RWPE1 (cell line): ENCODE measurements at regions of chr13 and their contacts with region 1.

Region 1: GRCh38 chr13:106090001-106090783 is 445.3 kb downstream of the EFNB2 start:
- DNase-seq: no peak
- H3K27ac ChIP-seq: no peak overlapping the region
- CTCF ChIP-seq: no peak

Region 2: DNA sequence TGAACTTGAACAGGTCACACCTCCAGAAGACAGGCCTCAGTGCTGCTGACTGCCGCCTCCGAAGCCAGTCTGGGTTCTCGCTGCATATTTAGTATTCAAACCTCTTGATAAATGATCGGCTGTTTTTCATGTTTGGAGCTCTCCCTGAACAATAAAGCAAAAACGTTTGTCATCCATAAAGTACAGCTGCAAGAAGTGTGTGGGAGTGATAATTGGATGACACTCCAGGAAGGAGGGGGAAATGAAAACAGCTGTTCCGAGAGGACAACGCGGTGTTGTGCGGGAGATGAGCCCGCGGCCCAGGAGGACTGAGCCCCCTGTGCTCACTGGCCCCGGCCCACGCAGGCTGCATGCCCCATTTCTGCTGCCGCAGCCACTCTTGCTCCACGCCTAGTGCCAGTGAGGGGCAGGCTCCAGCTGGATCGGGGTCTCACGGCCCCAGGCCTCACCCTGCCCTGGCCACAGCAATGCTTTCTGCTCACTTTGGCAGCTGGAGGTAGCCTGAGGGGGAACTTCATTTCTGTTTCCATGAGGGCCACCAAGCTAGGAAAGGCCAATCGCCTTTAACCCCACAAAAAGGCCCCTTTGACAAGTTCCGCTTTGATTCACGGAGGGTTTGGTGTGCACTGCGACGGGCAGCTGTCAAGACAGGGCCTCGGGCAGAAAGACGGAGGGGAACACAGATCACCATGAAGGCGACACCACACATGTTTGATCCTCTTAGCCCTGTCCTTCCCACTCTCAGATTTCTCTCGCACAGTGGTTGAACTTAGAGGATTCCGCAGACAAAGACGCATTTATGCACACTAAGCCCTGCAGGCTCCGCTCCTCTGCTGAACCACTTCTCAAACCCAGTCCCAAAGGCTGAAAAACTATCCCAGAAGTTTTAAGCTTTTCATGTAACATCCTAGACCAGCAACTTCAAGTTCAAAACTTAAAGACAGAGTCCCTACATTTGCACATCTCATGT is 92.3 kb before region 1 on chr13:
- CTCF ChIA-PET with region 1: no interaction called
- POLR2A ChIA-PET with region 1: no interaction called
- DNase-seq: no peak
- H3K27ac ChIP-seq: no peak overlapping the region
- CTCF ChIP-seq: no peak

Region 3: DNA sequence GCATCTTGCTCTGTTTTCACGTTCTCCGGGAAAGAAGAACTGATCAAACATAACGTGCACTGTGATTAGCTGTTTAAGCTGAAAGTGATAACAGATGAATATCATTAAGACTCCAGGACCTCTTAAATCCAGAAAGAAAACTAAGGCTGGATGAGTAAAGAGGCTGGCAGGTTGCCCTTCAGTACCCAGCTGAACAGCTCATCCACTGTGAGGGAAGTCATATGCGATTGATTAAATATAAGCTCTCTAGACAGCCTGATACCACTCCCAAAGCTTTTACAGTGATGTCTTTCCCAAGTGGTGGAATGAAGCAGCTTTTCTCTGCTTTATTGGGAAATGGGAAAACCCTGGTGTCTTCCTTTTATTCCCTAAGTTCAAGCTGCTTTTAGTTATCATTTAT is 328.4 kb after region 1 on chr13:
- CTCF ChIA-PET with region 1: interaction called, 10 read pairs
- POLR2A ChIA-PET with region 1: no interaction called
- DNase-seq: no peak
- H3K27ac ChIP-seq: no peak overlapping the region
- CTCF ChIP-seq: no peak